ENCODE measurements at regions of chr21 and their contacts with region 1.

Region 1: DNA sequence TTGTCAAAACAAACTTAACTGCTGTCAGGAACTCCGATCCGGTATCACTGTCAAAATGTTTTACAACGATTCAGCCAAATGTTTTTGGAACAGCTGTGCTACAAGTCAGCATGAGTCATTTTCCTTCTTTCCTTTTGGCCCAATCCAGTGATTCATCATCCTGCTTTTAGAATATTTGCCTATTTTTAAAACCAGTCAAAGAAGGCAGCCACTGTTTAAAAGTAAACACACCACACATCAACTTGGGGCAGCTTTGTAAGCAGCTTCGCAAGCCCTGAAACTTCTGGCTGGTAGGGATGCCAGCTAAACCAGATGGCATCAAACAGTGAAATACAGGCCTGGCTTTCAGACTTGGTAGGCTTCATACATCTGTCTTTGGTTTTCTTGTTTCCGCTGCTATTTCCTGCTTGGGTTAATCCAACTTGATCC is 14.9 kb downstream of the MAP3K7CL start:
- DNase-seq: peak; percentile 74 to 81
- ATAC-seq: peak; percentile 93 to 94
- H3K4me3 ChIP-seq: no peak overlapping the region
- H3K27ac ChIP-seq: peak overlapping the region; percentile 78 to 91 (median 84)
- H3K4me1 ChIP-seq: peaks cover 59 to 60% of the 10 kb centered on the region in 2 donors
- H3K27me3 ChIP-seq: no peaks in the 10 kb centered on the region
- CTCF ChIP-seq: no peak
- POLR2A ChIP-seq: peak in 1 of 2 donors; percentile 41

Region 2: GRCh38 chr21:28884976-28885852 is 260.2 kb before region 1 on chr21:
- in situ Hi-C with region 1: no loop called
- intact Hi-C with region 1: loop called (anchors 10 kb)
- DNase-seq: peak; percentile 66 to 86
- ATAC-seq: peak; percentile 94 to 97
- H3K4me3 ChIP-seq: peak overlapping the region; percentile 68 to 82 (median 70)
- H3K27ac ChIP-seq: peak overlapping the region; percentile 83 to 89 (median 88)
- H3K4me1 ChIP-seq: peaks cover 7 to 11% of the 10 kb centered on the region in 2 donors
- H3K27me3 ChIP-seq: no peaks in the 10 kb centered on the region
- CTCF ChIP-seq: no peak
- POLR2A ChIP-seq: peak; percentile 40 to 49

Region 3: DNA sequence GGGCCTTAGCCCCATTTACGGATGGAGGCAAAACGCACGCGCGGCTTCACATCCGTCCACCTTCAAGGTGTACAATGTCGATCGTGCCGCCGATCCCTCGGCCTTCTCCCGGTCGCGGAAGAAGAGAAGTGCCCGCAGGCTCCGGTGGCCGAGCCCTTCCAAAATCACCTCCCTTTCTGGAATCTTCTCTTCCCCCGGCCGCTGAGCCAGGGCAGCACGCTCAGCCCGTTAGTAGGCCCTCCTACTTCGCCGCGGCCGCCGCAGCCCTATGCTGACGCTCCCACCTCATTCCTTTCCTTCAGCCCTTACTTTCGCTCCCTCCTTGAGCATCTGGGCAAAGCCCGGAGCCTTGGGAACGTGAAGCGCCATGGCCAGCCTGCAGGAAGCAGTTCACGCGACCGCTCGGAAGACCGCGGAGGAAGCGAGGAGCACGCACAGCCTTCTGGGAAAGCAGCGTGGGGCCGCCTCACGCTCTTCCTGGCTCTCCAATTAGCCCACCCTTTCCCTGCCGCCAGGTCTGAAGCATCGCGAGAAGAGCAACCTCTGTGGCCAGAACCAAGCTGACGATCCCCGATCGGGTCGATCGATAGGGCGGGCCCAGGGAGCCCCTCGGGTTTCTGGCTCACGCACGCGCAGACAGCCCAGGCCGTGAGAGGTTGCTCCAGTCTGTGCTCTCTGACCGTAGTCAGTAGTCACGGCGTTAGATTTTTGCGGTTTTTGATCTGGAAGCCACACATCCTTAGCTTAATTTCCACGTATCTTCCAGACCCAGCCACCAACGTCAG is 72.0 kb before region 1 on chr21 and contains the start of gene CCT8:
- in situ Hi-C with region 1: no loop called
- intact Hi-C with region 1: loop called (anchors 5 kb)
- DNase-seq: peak; percentile 99
- ATAC-seq: peak; percentile 97
- H3K4me3 ChIP-seq: peak within 1 kb of the TSS; percentile 89 to 100 (median 100)
- H3K27ac ChIP-seq: peak within 1 kb of the TSS; percentile 94 to 99 (median 98)
- H3K4me1 ChIP-seq: peaks cover 27 to 29% of the 10 kb centered on the region in 2 donors
- H3K27me3 ChIP-seq: no peaks in the 10 kb centered on the region
- CTCF ChIP-seq: peak in 1 of 5 experiments; percentile 15
- POLR2A ChIP-seq: peak; percentile 71 to 83
- total RNA-seq, gene CCT8: 91.8 to 119 (median 99.1) TPM

Region 4: DNA sequence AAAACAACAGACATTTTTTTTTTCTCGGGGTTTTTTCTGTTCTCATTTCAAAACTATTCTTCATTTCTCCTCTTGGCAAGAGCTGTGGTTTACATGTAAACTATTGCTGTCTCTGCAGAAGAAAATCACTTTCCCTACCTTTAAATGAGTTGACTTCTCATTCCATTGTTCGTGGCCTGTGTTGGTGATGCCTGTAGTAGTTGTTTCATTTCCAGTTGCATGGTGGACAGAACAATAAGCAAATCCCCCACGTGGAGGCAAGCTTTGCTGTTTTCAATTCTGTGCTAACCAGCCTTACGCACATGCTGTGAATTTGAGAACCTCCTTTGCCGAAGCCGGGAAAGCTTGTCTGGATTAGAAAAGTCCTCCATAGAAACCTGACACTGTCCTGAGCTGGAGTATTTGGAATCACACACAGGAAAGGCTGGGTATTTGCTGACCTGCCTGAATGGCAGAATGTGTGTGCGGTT is 41.1 kb before region 1 on chr21:
- in situ Hi-C with region 1: no loop called
- intact Hi-C with region 1: loop called (anchors 1 kb)
- DNase-seq: peak; percentile 17 to 53
- ATAC-seq: peak; percentile 93 to 96
- H3K4me3 ChIP-seq: no peak overlapping the region
- H3K27ac ChIP-seq: peak overlapping the region; percentile 2 to 44 (median 20)
- H3K4me1 ChIP-seq: peaks cover 11 to 13% of the 10 kb centered on the region in 2 donors
- H3K27me3 ChIP-seq: no peaks in the 10 kb centered on the region
- CTCF ChIP-seq: peak in 1 of 5 experiments; percentile 27
- POLR2A ChIP-seq: no peak

Region 5: GRCh38 chr21:29130270-29130969 is 14.9 kb before region 1 on chr21 and contains the start of gene MAP3K7CL:
- in situ Hi-C with region 1: no loop called
- intact Hi-C with region 1: loop called (anchors 1 kb)
- DNase-seq: peak; percentile 81 to 88
- ATAC-seq: peak; percentile 93 to 96
- H3K4me3 ChIP-seq: peak within 1 kb of the TSS; percentile 1 to 49 (median 26)
- H3K27ac ChIP-seq: peak within 1 kb of the TSS; percentile 84 to 91 (median 90)
- H3K4me1 ChIP-seq: peaks cover 11 to 12% of the 10 kb centered on the region in 2 donors
- H3K27me3 ChIP-seq: no peaks in the 10 kb centered on the region
- CTCF ChIP-seq: no peak
- POLR2A ChIP-seq: no peak
- total RNA-seq, gene MAP3K7CL: 4.3 to 17.4 (median 15.5) TPM in 3 of 4 donors, not detected in the other

Measured in gastrocnemius medialis (tissue), 4 donors.